PC-9 (cell line): ENCODE measurements at regions of chr6 and their contacts with region 1.

Region 1: DNA sequence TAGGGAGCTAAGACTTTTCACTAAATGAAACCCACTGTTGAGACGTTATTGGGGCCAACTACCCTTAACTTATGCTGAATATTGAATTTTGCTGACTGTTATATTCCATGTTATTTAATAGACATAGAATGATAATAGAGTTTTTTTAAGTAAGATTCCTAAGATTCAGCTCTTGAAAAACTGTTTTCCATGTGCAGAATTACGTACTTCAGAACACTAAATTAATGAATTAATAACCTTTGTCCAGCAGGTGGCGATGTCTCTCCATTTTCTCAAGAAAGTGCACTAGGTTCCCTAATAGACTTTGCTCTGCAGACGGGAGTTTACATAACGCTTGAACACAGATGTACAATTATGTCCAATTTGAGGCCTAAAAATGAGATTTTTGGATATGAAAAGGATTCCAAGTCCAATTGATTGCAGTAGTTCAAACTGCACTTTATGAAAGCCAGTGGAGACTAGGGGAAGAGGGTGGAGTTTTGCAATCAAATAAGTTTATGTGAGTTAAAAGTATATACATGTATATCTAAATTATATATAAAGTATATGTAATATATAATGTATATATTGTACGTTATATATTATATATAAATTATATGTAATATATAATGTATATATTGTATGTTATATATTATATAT is 282.1 kb downstream of the UST start:
- DNase-seq: peak; percentile 24 to 74
- H3K4me3 ChIP-seq: no peak overlapping the region
- H3K27ac ChIP-seq: no peak overlapping the region
- H3K4me1 ChIP-seq: peaks cover 42% of the 10 kb centered on the region
- H3K27me3 ChIP-seq: no peaks in the 10 kb centered on the region
- CTCF ChIP-seq: peak; percentile 85

Region 2: GRCh38 chr6:148559848-148560433 is 468.9 kb before region 1 on chr6:
- CTCF ChIA-PET with region 1: interaction called, 3 read pairs
- POLR2A ChIA-PET with region 1: no interaction called
- intact Hi-C with region 1: loop called (anchors 1 kb)
- DNase-seq: peak in 1 of 2 experiments; percentile 67
- H3K4me3 ChIP-seq: peak overlapping the region; percentile 59; the same call in 1 of the 2 replicates
- H3K27ac ChIP-seq: no peak overlapping the region
- H3K4me1 ChIP-seq: no peaks in the 10 kb centered on the region
- H3K27me3 ChIP-seq: no peaks in the 10 kb centered on the region
- CTCF ChIP-seq: peak; percentile 92

Region 3: GRCh38 chr6:148746363-148747144 is 282.3 kb before region 1 on chr6 and contains the start of gene UST:
- CTCF ChIA-PET with region 1: no interaction called
- POLR2A ChIA-PET with region 1: no interaction called
- intact Hi-C with region 1: loop called (anchors 2 kb)
- DNase-seq: peak; percentile 70 to 80
- H3K4me3 ChIP-seq: peak within 1 kb of the TSS; percentile 82
- H3K27ac ChIP-seq: 0 out of 2 replicates have a peak within 1 kb of the TSS, but pooled peaks have one; percentile 20
- H3K4me1 ChIP-seq: peaks cover 8% of the 10 kb centered on the region
- H3K27me3 ChIP-seq: no peaks in the 10 kb centered on the region
- CTCF ChIP-seq: peak; percentile 61
- total RNA-seq, gene UST: 3.9 and 4.2 TPM in 2 replicates

Region 4: GRCh38 chr6:149235130-149235561 is 206.3 kb after region 1 on chr6:
- CTCF ChIA-PET with region 1: no interaction called
- POLR2A ChIA-PET with region 1: no interaction called
- intact Hi-C with region 1: loop called (anchors 2 kb)
- DNase-seq: peak; percentile 48 to 75
- H3K4me3 ChIP-seq: no peak overlapping the region
- H3K27ac ChIP-seq: peak overlapping the region; percentile 87
- H3K4me1 ChIP-seq: peaks cover 45% of the 10 kb centered on the region
- H3K27me3 ChIP-seq: no peaks in the 10 kb centered on the region
- CTCF ChIP-seq: no peak

Region 5: GRCh38 chr6:149347067-149347466 is 318.2 kb after region 1 on chr6:
- CTCF ChIA-PET with region 1: no interaction called
- POLR2A ChIA-PET with region 1: interaction called, 12 read pairs
- intact Hi-C with region 1: no loop called
- DNase-seq: no peak
- H3K4me3 ChIP-seq: no peak overlapping the region
- H3K27ac ChIP-seq: no peak overlapping the region
- H3K4me1 ChIP-seq: no peaks in the 10 kb centered on the region; the same call in 1 of the 2 replicates
- H3K27me3 ChIP-seq: no peaks in the 10 kb centered on the region
- CTCF ChIP-seq: no peak

Region 6: GRCh38 chr6:149513915-149514314 is 485.0 kb after region 1 on chr6:
- CTCF ChIA-PET with region 1: interaction called, 3 read pairs
- POLR2A ChIA-PET with region 1: no interaction called
- intact Hi-C with region 1: loop called (anchors 1 kb)
- DNase-seq: no peak
- H3K4me3 ChIP-seq: no peak overlapping the region
- H3K27ac ChIP-seq: no peak overlapping the region
- H3K4me1 ChIP-seq: no peaks in the 10 kb centered on the region
- H3K27me3 ChIP-seq: no peaks in the 10 kb centered on the region
- CTCF ChIP-seq: no peak